ENCODE measurements at regions of chr14 and their contacts with region 1.

Region 1: DNA sequence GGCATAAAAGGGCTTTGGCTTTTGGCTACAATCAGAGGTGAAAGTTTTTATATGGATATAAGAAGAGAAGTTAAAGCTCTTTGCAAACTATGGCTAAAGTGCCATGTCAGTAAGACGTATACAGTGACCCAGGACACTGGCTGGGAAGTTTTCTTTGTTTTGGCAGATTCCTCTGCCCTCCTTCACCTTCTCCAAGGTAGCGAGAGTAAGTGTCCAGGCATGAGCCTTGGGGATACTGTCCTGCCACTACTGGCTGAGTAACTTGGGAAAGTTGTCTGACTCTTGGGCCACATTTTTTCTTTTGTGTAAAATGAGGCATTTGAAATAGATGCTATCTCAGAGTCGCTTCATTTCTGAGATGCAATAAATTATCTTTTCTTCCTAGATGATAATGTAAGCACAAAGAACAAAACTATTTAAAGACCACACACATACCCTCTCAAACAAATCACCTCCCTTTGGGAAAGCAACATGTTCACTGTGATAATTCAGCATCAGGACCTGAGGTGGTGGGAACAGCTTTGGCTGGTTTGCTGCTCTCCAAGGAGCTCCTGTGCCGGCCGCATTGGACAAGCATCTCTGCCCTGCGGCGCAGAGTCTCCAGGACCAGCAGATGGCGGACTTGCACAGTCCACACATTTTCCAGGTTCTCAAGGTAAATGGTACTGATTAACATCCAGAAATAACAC is 106.3 kb downstream of the PTCSC3 start:
- DNase-seq: peak; percentile 32
- H3K4me3 ChIP-seq: no peak overlapping the region
- H3K27ac ChIP-seq: no peak overlapping the region
- H3K27me3 ChIP-seq: no peaks in the 10 kb centered on the region
- CTCF ChIP-seq: peak; percentile 92

Region 2: GRCh38 chr14:35883677-35884293 is 186.4 kb before region 1 on chr14:
- CTCF ChIA-PET with region 1: interaction called, 12 read pairs
- POLR2A ChIA-PET with region 1: no interaction called
- DNase-seq: no peak
- H3K4me3 ChIP-seq: no peak overlapping the region
- H3K27ac ChIP-seq: no peak overlapping the region
- H3K27me3 ChIP-seq: no peaks in the 10 kb centered on the region
- CTCF ChIP-seq: peak; percentile 72

Region 3: GRCh38 chr14:35944847-35945246 is 125.3 kb before region 1 on chr14:
- CTCF ChIA-PET with region 1: no interaction called
- POLR2A ChIA-PET with region 1: no interaction called
- DNase-seq: no peak
- H3K4me3 ChIP-seq: no peak overlapping the region
- H3K27ac ChIP-seq: no peak overlapping the region
- H3K27me3 ChIP-seq: no peaks in the 10 kb centered on the region
- CTCF ChIP-seq: no peak

Region 4: GRCh38 chr14:36059531-36059930 is 10.6 kb before region 1 on chr14:
- CTCF ChIA-PET with region 1: interaction called, 26 read pairs
- POLR2A ChIA-PET with region 1: no interaction called
- DNase-seq: no peak
- H3K4me3 ChIP-seq: no peak overlapping the region
- H3K27ac ChIP-seq: no peak overlapping the region
- H3K27me3 ChIP-seq: no peaks in the 10 kb centered on the region
- CTCF ChIP-seq: no peak

Region 5: DNA sequence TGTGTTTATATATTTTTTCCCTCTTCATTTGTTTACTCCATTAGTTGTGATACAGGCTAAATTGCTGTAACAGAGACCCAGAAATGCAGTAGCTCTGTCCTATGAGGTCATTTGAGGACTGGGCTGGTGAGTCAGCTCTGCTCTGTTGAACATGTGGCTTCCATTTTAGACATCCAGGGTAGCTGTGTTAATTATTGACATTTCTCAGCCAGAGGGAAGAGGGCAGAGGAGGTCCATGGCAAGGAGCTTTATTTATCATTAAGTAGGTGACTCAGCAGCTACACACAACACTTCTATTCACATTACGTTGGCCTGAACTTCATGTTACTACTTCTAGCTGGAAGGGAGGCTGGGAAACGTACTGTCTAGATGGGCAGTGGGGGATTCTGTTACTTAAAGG is 20.9 kb after region 1 on chr14:
- CTCF ChIA-PET with region 1: interaction called, 37 read pairs
- POLR2A ChIA-PET with region 1: no interaction called
- DNase-seq: peak; percentile 68
- H3K4me3 ChIP-seq: no peak overlapping the region
- H3K27ac ChIP-seq: no peak overlapping the region
- H3K27me3 ChIP-seq: no peaks in the 10 kb centered on the region
- CTCF ChIP-seq: no peak

Region 6: GRCh38 chr14:36373982-36374673 is 304.0 kb after region 1 on chr14:
- CTCF ChIA-PET with region 1: interaction called, 93 read pairs
- POLR2A ChIA-PET with region 1: no interaction called
- DNase-seq: peak; percentile 56
- H3K4me3 ChIP-seq: no peak overlapping the region
- H3K27ac ChIP-seq: no peak overlapping the region
- H3K27me3 ChIP-seq: no peaks in the 10 kb centered on the region
- CTCF ChIP-seq: peak; percentile 91